Body of pancreas (tissue), 4 donors: ENCODE measurements at regions of chr14 and their contacts with region 1.

Region 1: GRCh38 chr14:33792720-33793368 is 158.0 kb downstream of the EGLN3 start:
- DNase-seq: peak; percentile 77 to 83 (median 78)
- ATAC-seq: peak; percentile 83
- H3K4me3 ChIP-seq: no peak overlapping the region
- H3K27ac ChIP-seq: no peak overlapping the region
- H3K4me1 ChIP-seq: peaks cover 8% of the 10 kb centered on the region
- H3K27me3 ChIP-seq: no peaks in the 10 kb centered on the region
- CTCF ChIP-seq: peak; percentile 75 to 97 (median 87)
- POLR2A ChIP-seq: no peak

Region 2: DNA sequence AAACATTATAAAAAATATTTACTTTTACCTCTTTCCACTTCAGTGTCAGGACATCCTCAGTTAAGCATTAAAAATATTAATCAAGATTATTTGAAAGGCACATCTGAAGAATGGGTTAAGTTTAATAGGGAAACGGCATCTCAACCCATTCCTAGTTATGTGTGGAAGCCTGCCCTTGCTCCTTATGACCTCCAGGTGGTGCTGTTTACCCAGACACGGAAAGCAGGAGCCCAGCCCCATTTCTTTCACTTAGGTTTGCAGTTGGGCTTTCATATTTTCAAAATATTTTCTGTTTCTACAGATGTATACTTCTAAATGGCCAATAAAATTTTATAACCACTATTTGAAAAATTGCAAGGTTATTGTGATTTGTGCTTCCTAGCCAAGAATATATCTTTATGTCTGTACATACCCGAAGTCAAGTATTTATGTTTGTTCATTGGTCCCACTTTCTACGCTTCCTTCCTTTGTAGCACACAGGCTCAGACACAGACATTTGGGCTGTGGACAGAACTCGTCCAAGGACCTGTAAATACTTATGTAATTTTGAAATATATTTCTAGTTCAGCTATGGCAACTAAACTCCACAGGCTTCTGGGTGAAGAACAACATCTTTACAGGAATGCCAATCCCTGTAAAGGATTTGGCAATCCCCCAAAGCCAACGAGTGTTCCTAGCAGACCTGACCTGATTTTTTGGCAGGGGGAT is 1216.6 kb before region 1 on chr14:
- intact Hi-C with region 1: loop called (anchors 5 kb)
- DNase-seq: peak; percentile 45 to 65 (median 56)
- ATAC-seq: peak; percentile 89
- H3K4me3 ChIP-seq: no peak overlapping the region
- H3K27ac ChIP-seq: no peak overlapping the region
- H3K4me1 ChIP-seq: peaks cover 10% of the 10 kb centered on the region
- H3K27me3 ChIP-seq: no peaks in the 10 kb centered on the region
- CTCF ChIP-seq: peak; percentile 83 to 99 (median 88)
- POLR2A ChIP-seq: no peak

Region 3: DNA sequence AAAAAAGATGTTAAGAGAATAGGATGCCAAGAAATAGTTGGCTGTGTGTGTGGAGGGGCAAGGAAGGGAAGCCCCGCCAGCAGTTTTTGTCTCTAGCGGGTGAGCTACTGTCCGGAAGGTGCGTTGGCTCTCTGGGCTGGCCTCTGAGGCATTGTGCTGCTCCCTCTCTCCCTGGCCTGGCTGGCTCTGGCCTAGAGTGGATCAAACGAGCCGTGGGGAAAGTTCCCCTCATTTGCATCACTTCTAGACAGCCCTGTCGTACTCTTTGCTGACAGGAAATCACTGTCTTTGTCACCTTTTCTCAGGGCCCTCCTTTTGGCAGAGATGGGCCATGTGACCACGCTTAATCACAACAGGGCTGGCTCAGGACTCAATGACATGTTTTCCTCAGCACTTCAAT is 1090.3 kb before region 1 on chr14:
- intact Hi-C with region 1: loop called (anchors 10 kb)
- DNase-seq: peak in 3 of 4 donors; percentile 6 to 13 (median 10)
- ATAC-seq: peak; percentile 35
- H3K4me3 ChIP-seq: no peak overlapping the region
- H3K27ac ChIP-seq: no peak overlapping the region
- H3K4me1 ChIP-seq: peaks cover 7% of the 10 kb centered on the region
- H3K27me3 ChIP-seq: no peaks in the 10 kb centered on the region
- CTCF ChIP-seq: no peak
- POLR2A ChIP-seq: no peak

Region 4: GRCh38 chr14:34300882-34301734 is 508.3 kb after region 1 on chr14:
- intact Hi-C with region 1: no loop called
- DNase-seq: peak in 2 of 4 donors; percentile 15 to 25
- ATAC-seq: no peak
- H3K4me3 ChIP-seq: no peak overlapping the region
- H3K27ac ChIP-seq: no peak overlapping the region
- H3K4me1 ChIP-seq: peaks cover 14% of the 10 kb centered on the region
- H3K27me3 ChIP-seq: no peaks in the 10 kb centered on the region
- CTCF ChIP-seq: peak; percentile 33 to 68 (median 61)
- POLR2A ChIP-seq: no peak